ENCODE measurements at regions of chr10 and their contacts with region 1.

Region 1: DNA sequence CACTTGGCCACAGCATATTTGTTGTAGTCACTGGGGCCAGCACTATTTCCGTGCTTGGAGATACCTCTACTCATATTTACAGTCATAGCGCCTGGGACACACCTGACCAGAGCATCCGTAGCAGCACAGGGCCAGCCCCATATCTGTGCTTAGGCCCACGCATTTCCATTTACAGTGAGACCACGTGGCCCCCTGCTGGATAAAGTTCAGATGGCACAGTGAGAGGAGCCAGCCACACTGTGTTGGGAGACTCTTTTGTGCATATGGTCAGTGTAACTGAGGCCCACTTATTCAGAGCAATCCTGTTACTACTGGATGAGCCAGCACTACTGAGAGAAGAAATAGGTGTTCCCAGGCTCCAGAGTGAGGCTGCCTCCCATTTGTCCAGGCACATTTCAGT is 455.3 kb downstream of the REEP3 start:
- DNase-seq: peak in 1 of 2 experiments; percentile 75
- H3K4me3 ChIP-seq: no peak overlapping the region
- H3K27ac ChIP-seq: no peak overlapping the region
- H3K4me1 ChIP-seq: no peaks in the 10 kb centered on the region; a peak in 1 of 7 replicates
- H3K27me3 ChIP-seq: no peaks in the 10 kb centered on the region
- CTCF ChIP-seq: peak; percentile 73 to 83 (median 77)
- EP300 ChIP-seq: no peak
- POLR2A ChIP-seq: no peak
- RAD21 ChIP-seq: peak; percentile 73 to 78

Region 2: DNA sequence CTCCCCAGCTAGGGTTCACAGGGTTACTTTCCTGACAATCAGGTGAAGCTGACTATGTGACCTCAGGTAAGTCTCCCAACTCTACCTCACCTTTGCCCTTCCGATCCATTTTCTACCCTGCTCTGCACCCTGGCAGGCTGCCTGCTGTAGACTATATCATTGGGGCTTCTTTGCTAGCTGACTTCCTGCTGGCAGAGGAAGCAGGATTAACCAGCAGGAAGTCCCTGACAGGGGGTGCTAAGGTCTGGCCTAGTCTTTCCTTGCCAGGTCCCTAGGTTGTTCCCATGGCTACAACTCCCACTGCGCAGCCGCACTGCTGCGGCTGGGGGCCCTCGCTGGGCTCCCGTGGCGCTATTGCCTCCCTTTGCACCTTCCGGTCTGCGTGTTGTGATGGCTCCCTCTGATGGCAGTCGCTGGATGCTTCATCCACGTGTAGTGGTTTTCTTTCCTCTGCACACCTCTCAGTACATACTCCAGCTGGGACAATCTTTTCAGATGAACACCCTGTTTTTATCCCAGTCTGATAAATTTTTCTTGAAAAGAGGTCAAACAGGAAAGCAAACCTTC is 89.4 kb before region 1 on chr10:
- CTCF ChIA-PET with region 1: interaction called, 17 read pairs
- POLR2A ChIA-PET with region 1: no interaction called
- DNase-seq: peak; percentile 61 to 79
- H3K4me3 ChIP-seq: no peak overlapping the region
- H3K27ac ChIP-seq: no peak overlapping the region
- H3K4me1 ChIP-seq: peaks cover 0 to 5% (median 4%) of the 10 kb centered on the region in 4 experiments; a peak in 4 of 7 replicates
- H3K27me3 ChIP-seq: no peaks in the 10 kb centered on the region
- CTCF ChIP-seq: peak; percentile 82 to 85 (median 83)
- EP300 ChIP-seq: no peak
- POLR2A ChIP-seq: no peak
- RAD21 ChIP-seq: peak; percentile 67 to 73

Region 3: DNA sequence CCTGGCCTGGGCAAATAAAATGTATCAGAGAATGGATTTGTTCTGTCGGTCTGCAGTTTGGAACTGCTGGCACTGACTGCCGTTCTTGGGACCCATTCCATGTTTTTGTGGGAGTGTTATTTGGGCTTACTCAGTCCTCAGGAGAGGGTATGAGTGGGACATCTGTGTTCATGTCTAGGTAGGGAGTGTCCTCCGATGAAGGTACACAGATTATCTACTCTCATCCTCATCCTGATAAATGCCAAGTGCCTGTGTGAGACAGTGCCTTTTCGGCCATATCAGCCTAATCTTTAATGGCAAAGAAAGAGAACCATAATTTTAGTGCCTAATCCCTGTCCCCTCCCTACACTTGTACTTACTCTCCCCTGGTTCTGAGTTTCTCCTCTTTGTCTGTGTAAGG is 46.0 kb before region 1 on chr10:
- CTCF ChIA-PET with region 1: interaction called, 37 read pairs
- POLR2A ChIA-PET with region 1: no interaction called
- DNase-seq: no peak
- H3K4me3 ChIP-seq: no peak overlapping the region
- H3K27ac ChIP-seq: no peak overlapping the region
- H3K4me1 ChIP-seq: no peaks in the 10 kb centered on the region
- H3K27me3 ChIP-seq: no peaks in the 10 kb centered on the region
- CTCF ChIP-seq: no peak
- EP300 ChIP-seq: no peak
- POLR2A ChIP-seq: no peak
- RAD21 ChIP-seq: no peak

Region 4: DNA sequence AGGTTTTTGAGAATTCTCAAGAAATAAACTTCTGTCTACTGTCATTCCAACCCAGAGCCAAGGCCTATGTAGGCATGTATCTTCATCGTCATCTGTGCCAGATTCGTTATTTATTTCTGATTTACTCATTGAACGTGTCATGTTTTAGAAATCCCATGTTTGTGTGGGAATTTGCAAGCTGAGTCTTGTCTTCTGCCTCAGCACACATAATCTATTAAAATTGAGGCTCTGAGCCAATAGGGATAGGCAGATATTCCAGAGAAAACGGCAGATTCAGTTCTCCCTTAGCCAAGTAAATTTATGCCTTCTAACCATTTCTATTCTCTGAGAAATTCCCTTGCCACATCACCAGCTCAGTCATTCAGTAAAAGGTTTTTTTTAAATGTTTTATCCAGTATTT is 10.7 kb before region 1 on chr10:
- CTCF ChIA-PET with region 1: interaction called, 25 read pairs
- POLR2A ChIA-PET with region 1: no interaction called
- DNase-seq: no peak
- H3K4me3 ChIP-seq: no peak overlapping the region
- H3K27ac ChIP-seq: no peak overlapping the region
- H3K4me1 ChIP-seq: no peaks in the 10 kb centered on the region
- H3K27me3 ChIP-seq: no peaks in the 10 kb centered on the region
- CTCF ChIP-seq: no peak
- EP300 ChIP-seq: no peak
- POLR2A ChIP-seq: no peak
- RAD21 ChIP-seq: no peak

Region 5: GRCh38 chr10:63994371-63994770 is 17.8 kb after region 1 on chr10:
- CTCF ChIA-PET with region 1: interaction called, 14 read pairs
- POLR2A ChIA-PET with region 1: no interaction called
- DNase-seq: no peak
- H3K4me3 ChIP-seq: no peak overlapping the region
- H3K27ac ChIP-seq: no peak overlapping the region
- H3K4me1 ChIP-seq: no peaks in the 10 kb centered on the region
- H3K27me3 ChIP-seq: no peaks in the 10 kb centered on the region
- CTCF ChIP-seq: no peak
- EP300 ChIP-seq: no peak
- POLR2A ChIP-seq: no peak
- RAD21 ChIP-seq: no peak

Region 6: DNA sequence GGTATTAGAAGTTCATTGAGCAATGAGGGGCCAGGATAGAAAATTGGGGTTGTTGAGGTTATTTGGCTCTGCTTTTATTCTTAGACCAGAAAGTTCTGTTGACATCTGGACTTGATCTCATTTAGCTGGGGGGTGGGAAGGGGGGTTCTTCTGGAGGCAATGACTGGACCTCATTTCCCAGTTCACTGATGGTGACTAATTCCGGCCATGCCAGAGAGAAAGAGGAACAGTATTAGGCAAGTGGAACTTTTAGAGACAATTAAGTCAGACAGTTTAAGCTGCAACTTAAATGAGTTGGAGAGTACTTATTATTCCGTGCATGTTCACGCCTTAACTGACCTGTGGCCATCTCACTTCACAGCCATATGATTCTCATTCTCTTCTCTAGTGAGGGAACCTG is 57.2 kb after region 1 on chr10:
- CTCF ChIA-PET with region 1: interaction called, 19 read pairs
- POLR2A ChIA-PET with region 1: no interaction called
- DNase-seq: no peak
- H3K4me3 ChIP-seq: no peak overlapping the region
- H3K27ac ChIP-seq: no peak overlapping the region
- H3K4me1 ChIP-seq: no peaks in the 10 kb centered on the region
- H3K27me3 ChIP-seq: no peaks in the 10 kb centered on the region
- CTCF ChIP-seq: no peak
- EP300 ChIP-seq: no peak
- POLR2A ChIP-seq: no peak
- RAD21 ChIP-seq: no peak

Region 7: DNA sequence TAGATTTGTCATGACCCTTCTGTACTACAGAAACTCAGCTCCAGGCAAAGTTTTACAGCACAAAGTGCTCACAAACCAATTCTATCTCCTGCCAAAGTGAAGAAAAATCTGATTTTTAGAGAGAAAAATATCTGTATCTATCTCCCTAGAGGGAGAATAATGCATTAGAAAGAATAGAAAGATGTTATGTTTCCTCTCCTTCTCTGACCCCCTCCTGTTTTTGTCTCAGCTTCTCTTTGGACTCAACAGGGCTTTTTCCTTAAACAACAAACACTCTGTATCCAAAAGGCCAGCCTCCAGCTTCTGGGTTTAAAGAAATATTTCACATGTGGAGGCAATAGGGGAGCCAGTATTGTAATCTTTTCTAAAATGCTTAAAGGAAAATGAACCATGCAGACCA is 172.1 kb after region 1 on chr10:
- CTCF ChIA-PET with region 1: no interaction called
- POLR2A ChIA-PET with region 1: no interaction called
- DNase-seq: no peak
- H3K4me3 ChIP-seq: no peak overlapping the region
- H3K27ac ChIP-seq: no peak overlapping the region
- H3K4me1 ChIP-seq: no peaks in the 10 kb centered on the region; a peak in 1 of 7 replicates
- H3K27me3 ChIP-seq: no peaks in the 10 kb centered on the region
- CTCF ChIP-seq: no peak
- EP300 ChIP-seq: no peak
- POLR2A ChIP-seq: no peak
- RAD21 ChIP-seq: no peak